ENCODE measurements at regions of chr17 and their contacts with region 1.

Region 1: DNA sequence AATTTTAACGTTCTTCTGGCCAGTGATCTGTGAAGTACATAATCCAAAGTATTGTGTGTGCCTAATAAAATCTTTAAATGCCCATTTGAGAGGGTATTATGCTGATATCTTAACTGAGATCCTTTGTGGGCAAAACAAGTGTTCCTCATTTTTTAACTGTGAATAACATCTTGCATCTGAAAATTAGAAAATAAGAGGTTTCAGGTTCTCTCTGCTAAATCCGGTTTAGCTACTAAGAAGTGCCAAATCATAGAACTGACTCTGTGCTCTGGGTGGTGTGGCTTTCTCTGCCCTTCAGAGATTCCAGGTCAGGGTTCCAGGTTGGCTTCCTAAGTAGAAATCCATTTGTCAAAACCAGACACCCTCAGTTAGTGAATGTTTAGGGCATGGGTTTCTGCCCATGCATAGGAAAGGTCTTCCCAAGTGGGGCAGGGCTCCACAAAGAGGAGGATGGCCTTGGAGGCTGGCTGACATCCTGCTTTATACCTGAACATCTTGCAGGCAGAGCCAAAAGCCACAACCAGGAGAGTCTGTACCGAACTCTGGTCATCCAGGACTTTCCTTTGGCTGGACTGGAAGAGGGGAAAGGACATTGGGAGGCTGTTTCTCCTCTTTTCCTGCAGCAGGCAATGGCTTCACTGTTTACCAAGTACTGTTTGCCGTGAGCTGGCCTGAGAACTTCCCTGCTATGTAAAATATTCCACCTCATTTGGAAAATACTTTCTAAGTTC is 8.5 kb downstream of the ALDH3A2 start:
- DNase-seq: no peak
- H3K4me3 ChIP-seq: no peak overlapping the region
- H3K27ac ChIP-seq: peak overlapping the region in 1 of 4 donors; percentile 27
- H3K4me1 ChIP-seq: peaks cover 0 to 18% (median 9%) of the 10 kb centered on the region in 4 donors
- H3K27me3 ChIP-seq: no peaks in the 10 kb centered on the region
- CTCF ChIP-seq: no peak
- EP300 ChIP-seq: no peak
- POLR2A ChIP-seq: no peak

Region 2: GRCh38 chr17:19362277-19363113 is 294.5 kb before region 1 on chr17 and contains the start of gene B9D1:
- intact Hi-C with region 1: no loop called
- DNase-seq: peak; percentile 97
- H3K4me3 ChIP-seq: peak within 1 kb of the TSS; percentile 65 to 83 (median 78)
- H3K27ac ChIP-seq: peak within 1 kb of the TSS; percentile 85 to 91 (median 88)
- H3K4me1 ChIP-seq: peaks cover 0 to 20% (median 17%) of the 10 kb centered on the region in 4 donors
- H3K27me3 ChIP-seq: no peaks in the 10 kb centered on the region
- CTCF ChIP-seq: peak; percentile 97 to 100 (median 98)
- EP300 ChIP-seq: peak in 2 of 4 donors; percentile 6 to 26
- POLR2A ChIP-seq: no peak
- total RNA-seq, gene B9D1: 15.2 to 22.4 (median 16.0) TPM

Region 3: GRCh38 chr17:19641687-19642372 is 15.2 kb before region 1 on chr17:
- intact Hi-C with region 1: loop called (anchors 2 kb)
- DNase-seq: no peak
- H3K4me3 ChIP-seq: no peak overlapping the region
- H3K27ac ChIP-seq: no peak overlapping the region
- H3K4me1 ChIP-seq: peaks cover 0 to 13% (median 10%) of the 10 kb centered on the region in 4 donors
- H3K27me3 ChIP-seq: no peaks in the 10 kb centered on the region
- CTCF ChIP-seq: no peak
- EP300 ChIP-seq: no peak
- POLR2A ChIP-seq: no peak